ENCODE measurements at regions of chr11 and their contacts with region 1.

Region 1: DNA sequence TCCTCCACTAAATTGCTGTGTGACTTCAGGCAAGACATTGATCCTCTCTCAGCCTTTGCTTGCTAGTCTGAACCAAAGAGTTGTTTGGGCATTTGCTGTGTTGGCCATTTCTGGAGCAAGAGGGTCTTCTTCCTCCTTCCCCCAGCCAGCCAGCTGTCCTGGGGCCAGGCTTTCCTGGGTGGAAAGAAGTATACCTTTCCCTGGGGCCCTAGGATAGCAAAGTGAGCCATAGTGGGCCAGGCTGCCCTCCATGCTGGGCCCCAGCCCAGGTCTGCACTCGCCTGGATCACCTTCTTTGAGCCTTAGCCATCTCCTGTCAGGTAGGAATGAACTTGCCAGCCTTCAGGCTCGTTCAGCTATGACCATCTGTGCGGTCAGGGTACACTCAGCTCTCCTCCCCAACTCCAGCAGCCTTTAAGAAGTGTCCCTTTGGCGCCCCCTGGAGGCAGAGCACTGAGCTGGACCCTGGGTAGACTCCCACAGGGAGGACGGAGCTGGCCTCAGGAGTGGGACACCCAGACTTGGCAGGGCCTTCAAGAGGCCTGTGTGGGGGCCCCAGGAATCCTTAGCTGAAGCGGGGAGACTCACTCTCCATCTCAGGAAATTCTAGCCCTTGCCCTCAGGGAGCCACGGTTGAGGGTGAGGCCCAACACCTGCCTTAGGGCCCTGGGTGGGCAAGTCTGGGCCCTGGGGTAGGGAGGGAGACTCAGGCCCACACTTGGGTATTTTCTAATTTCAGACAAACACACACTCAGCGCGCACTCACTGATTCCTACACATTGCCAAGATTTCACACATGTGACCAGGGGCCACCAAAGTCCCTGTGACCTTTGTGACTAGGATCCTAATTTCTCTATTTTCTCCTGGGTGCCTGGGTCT is 35.6 kb upstream of the TPBGL start:
- DNase-seq: peak; percentile 84 to 97 (median 93)
- ATAC-seq: peak; percentile 94
- H3K4me3 ChIP-seq: no peak overlapping the region
- H3K4me1 ChIP-seq: no peaks in the 10 kb centered on the region
- CTCF ChIP-seq: peak; percentile 80

Region 2: GRCh38 chr11:75142714-75143419 is 62.1 kb before region 1 on chr11:
- intact Hi-C with region 1: loop called (anchors 2 to 5 kb)
- DNase-seq: peak; percentile 68 to 84 (median 74)
- ATAC-seq: peak; percentile 85
- H3K4me3 ChIP-seq: no peak overlapping the region
- H3K4me1 ChIP-seq: peaks cover 31% of the 10 kb centered on the region
- CTCF ChIP-seq: no peak

Measured in mucosa of descending colon (tissue), 3 donors.